Panc1 (cell line): ENCODE measurements at regions of chr1 and their contacts with region 1.

Region 1: GRCh38 chr1:24830680-24831272 is 85.5 kb downstream of the CLIC4 start:
- DNase-seq: peak; percentile 67
- ATAC-seq: peak; percentile 90
- H3K4me3 ChIP-seq: no peak overlapping the region
- H3K27ac ChIP-seq: no peak overlapping the region
- H3K4me1 ChIP-seq: peaks cover 3% of the 10 kb centered on the region; the same call in 1 of the 2 replicates
- H3K27me3 ChIP-seq: no peaks in the 10 kb centered on the region
- CTCF ChIP-seq: peak; percentile 82; the same call in 1 of the 2 replicates

Region 2: DNA sequence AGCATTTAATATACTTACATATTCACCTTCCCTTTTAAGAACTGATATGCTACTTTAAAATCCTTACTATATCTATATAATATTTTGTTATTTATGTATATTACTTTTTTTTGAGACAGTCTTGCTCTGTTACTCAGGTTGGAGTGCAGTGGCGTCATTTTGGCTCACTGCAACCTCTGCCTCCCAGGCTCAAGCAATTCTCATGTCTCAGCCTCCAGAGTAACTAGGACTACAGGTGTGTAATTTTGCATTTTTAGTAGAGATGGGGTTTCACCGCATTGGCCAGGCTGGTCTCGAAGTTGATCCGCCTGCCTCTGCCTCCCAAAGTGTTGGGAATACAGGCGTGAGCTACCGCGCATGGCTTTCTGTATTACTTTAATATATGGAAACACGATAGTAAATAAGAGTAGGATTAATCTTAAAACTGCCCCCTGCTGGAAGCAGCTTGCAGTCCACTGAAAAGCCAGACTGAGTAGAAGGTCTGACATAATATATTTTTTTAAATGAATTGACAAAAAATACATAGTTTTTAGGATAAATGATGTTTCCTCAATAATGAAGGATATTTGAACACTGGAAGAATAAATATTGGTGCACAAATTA is 303.7 kb before region 1 on chr1:
- CTCF ChIA-PET with region 1: no interaction called
- POLR2A ChIA-PET with region 1: interaction called, 11 read pairs
- in situ Hi-C with region 1: no loop called
- intact Hi-C with region 1: no loop called
- DNase-seq: no peak
- ATAC-seq: peak; percentile 80; the same call in 1 of the 2 replicates
- H3K4me3 ChIP-seq: no peak overlapping the region
- H3K27ac ChIP-seq: no peak overlapping the region
- H3K4me1 ChIP-seq: no peaks in the 10 kb centered on the region
- H3K27me3 ChIP-seq: no peaks in the 10 kb centered on the region
- CTCF ChIP-seq: peak; percentile 83

Region 3: DNA sequence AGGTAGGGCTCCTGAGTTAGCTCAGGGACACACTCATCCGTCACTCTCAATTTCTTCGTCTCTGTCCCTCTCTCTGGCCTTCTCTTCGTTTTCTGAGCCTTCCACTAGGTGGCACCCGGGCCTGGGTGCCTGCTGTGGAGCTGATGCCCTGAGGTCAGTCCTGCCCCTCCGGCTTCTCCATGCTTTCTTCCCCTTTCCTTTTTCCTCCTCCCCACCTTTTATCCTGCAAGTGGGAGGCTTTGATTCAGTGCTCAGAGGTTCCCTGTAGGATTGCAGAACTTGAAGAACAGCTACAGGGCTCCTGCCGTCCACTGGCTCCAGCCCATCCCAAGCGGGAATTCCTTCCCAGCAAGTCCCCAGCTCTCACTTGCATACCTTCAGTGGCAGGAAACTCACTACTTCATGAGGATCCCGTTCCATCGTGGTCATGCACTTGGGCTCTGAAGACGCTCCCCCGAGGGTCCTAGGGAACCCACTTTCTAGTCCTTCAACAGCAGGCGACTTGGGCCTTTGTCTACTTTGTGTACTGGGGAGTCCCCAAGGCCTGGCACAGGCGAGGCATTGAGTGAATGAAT is 142.1 kb before region 1 on chr1:
- CTCF ChIA-PET with region 1: interaction called, 34 read pairs
- POLR2A ChIA-PET with region 1: interaction called, 3 read pairs
- in situ Hi-C with region 1: no loop called
- intact Hi-C with region 1: loop called (anchors 2 kb)
- DNase-seq: no peak
- ATAC-seq: peak; percentile 94
- H3K4me3 ChIP-seq: no peak overlapping the region
- H3K27ac ChIP-seq: no peak overlapping the region
- H3K4me1 ChIP-seq: peaks cover 5% of the 10 kb centered on the region; the same call in 1 of the 2 replicates
- H3K27me3 ChIP-seq: no peaks in the 10 kb centered on the region
- CTCF ChIP-seq: peak; percentile 95

Region 4: GRCh38 chr1:24727501-24728216 is 103.1 kb before region 1 on chr1:
- CTCF ChIA-PET with region 1: interaction called, 10 read pairs
- POLR2A ChIA-PET with region 1: no interaction called
- in situ Hi-C with region 1: no loop called
- intact Hi-C with region 1: no loop called
- DNase-seq: no peak
- ATAC-seq: peak; percentile 35; the same call in 1 of the 2 replicates
- H3K4me3 ChIP-seq: no peak overlapping the region
- H3K27ac ChIP-seq: 0 out of 2 replicates have a peak overlapping the region, but pooled peaks have one; percentile 14
- H3K4me1 ChIP-seq: peaks cover 24% of the 10 kb centered on the region
- H3K27me3 ChIP-seq: no peaks in the 10 kb centered on the region
- CTCF ChIP-seq: no peak

Region 5: DNA sequence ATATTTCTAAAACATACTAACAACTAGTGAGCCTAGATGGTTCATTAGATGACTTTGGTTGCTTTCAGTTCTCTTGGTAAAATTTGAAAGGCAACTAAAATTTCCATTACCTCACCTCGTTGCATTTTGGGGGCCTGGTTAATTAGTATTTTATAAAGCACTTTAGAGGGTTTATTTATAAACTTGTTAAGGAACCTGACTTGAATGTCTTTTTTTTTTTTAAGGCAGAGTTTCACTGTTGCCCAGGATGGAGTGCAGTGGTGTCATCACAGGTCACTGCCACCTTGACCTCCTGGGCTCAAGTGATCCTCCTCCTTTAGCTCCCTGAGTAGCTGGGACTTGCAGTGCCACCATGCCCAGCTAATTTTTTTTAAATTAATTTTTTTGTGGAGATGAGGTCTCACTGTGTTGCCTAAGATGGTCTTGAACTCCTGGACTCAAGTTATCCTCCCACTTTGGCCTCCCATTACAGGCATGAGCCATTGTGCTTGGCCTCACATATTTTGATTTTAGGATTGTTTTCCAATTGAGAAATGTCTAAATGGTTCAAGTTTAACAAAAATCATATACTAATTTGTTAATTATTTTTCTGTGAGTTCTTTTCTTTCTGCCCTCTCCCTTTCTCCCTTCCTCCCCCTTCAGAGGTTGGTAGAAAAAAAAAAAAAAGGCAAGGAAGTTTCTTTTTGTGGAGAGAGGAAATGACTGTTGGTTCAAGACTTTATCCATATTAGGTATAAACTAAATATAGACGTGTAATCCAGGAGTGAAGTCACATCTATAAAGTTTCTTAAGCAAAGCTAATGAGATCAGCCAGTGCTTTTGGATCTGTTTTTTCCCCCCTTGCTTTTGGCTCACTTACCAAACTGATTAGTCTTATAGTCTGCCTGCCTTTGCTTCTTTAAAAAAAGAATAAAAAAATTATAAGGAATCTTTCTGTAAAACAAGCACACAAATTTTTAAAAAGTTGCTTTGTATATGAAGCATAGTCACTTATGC is 60.8 kb before region 1 on chr1:
- CTCF ChIA-PET with region 1: no interaction called
- POLR2A ChIA-PET with region 1: no interaction called
- in situ Hi-C with region 1: no loop called
- intact Hi-C with region 1: no loop called
- DNase-seq: no peak
- ATAC-seq: no peak; the same call in 1 of the 2 replicates
- H3K4me3 ChIP-seq: no peak overlapping the region
- H3K27ac ChIP-seq: no peak overlapping the region
- H3K4me1 ChIP-seq: peaks cover 15% of the 10 kb centered on the region
- H3K27me3 ChIP-seq: no peaks in the 10 kb centered on the region
- CTCF ChIP-seq: no peak

Region 6: GRCh38 chr1:24786191-24786590 is 44.6 kb before region 1 on chr1:
- CTCF ChIA-PET with region 1: interaction called, 11 read pairs
- POLR2A ChIA-PET with region 1: no interaction called
- in situ Hi-C with region 1: no loop called
- intact Hi-C with region 1: no loop called
- DNase-seq: no peak
- ATAC-seq: no peak
- H3K4me3 ChIP-seq: no peak overlapping the region
- H3K27ac ChIP-seq: no peak overlapping the region
- H3K4me1 ChIP-seq: no peaks in the 10 kb centered on the region
- H3K27me3 ChIP-seq: no peaks in the 10 kb centered on the region
- CTCF ChIP-seq: no peak

Region 7: DNA sequence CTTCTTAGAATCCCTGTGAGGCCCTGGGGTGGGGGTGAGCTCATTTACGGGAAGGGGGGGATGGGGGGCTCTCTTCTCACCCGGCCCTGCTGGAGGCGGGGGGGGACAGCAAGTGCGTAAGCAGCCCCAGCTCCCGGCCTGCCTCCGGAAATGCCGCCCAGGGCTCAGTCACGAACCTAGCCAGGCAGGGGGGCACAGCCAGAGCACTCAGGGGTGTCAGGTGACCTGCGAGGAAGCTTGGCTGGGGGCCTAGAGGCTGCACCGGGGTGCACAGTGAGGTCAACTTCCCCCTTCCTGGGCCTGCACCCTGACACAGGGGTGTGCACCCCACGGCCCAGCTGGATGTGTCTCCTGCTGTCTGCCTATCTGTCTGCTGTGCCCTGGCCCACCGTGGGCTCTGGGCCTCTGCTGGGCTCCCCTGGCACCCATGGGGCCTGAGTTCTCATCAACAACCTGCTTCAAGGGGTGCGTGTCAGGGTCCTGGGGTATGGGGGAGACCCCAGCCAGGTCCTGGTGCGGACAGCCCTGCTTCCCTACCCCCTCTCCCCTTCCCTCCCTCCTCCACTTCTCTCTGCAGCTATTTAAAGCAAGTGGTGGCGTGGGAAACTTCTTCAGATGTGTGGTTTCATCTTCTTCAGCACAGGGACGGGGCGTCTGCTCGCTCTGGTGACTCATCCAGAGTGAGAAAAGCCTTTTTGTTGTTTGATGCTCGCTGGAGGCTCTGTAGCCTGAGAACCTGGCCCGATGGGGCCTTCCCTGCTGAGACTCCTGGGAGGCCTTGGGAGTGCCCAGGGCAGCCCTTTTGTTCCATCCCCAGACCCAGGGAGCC is 191.8 kb after region 1 on chr1:
- CTCF ChIA-PET with region 1: no interaction called
- POLR2A ChIA-PET with region 1: no interaction called
- in situ Hi-C with region 1: no loop called
- intact Hi-C with region 1: no loop called
- DNase-seq: no peak
- ATAC-seq: peak; percentile 75
- H3K4me3 ChIP-seq: no peak overlapping the region
- H3K27ac ChIP-seq: no peak overlapping the region
- H3K4me1 ChIP-seq: peaks cover 8% of the 10 kb centered on the region
- H3K27me3 ChIP-seq: no peaks in the 10 kb centered on the region
- CTCF ChIP-seq: no peak

Region 8: GRCh38 chr1:25037174-25038074 is 206.6 kb after region 1 on chr1:
- CTCF ChIA-PET with region 1: no interaction called
- POLR2A ChIA-PET with region 1: no interaction called
- in situ Hi-C with region 1: no loop called
- intact Hi-C with region 1: no loop called
- DNase-seq: peak; percentile 13
- ATAC-seq: peak; percentile 61
- H3K4me3 ChIP-seq: no peak overlapping the region
- H3K27ac ChIP-seq: no peak overlapping the region
- H3K4me1 ChIP-seq: no peaks in the 10 kb centered on the region
- H3K27me3 ChIP-seq: no peaks in the 10 kb centered on the region
- CTCF ChIP-seq: peak; percentile 83